ENCODE measurements at regions of chr17 and their contacts with region 1.

Region 1: GRCh38 chr17:76219670-76220383 is 20.5 kb downstream of the RNF157 start:
- DNase-seq: peak in 2 of 4 experiments; percentile 52 to 73
- ATAC-seq: peak; percentile 69
- H3K4me3 ChIP-seq: no peak overlapping the region
- H3K27ac ChIP-seq: peak overlapping the region; percentile 54; the same call in 2 of the 3 replicates
- H3K4me1 ChIP-seq: peaks cover 4 to 33% of the 10 kb centered on the region in 2 experiments
- H3K27me3 ChIP-seq: no peaks in the 10 kb centered on the region
- CTCF ChIP-seq: no peak
- EP300 ChIP-seq: no peak; the same call in 1 of the 2 replicates
- POLR2A ChIP-seq: no peak
- RAD21 ChIP-seq: no peak

Region 2: GRCh38 chr17:76191896-76192295 is 27.9 kb before region 1 on chr17:
- CTCF ChIA-PET with region 1: no interaction called
- POLR2A ChIA-PET with region 1: interaction called, 3 read pairs
- in situ Hi-C with region 1: no loop called
- intact Hi-C with region 1: loop called (anchors 5 kb)
- DNase-seq: no peak
- ATAC-seq: no peak
- H3K4me3 ChIP-seq: no peak overlapping the region
- H3K27ac ChIP-seq: peak overlapping the region; percentile 1; the same call in 1 of the 3 replicates
- H3K4me1 ChIP-seq: peaks cover 44 to 63% of the 10 kb centered on the region in 2 experiments
- H3K27me3 ChIP-seq: no peaks in the 10 kb centered on the region
- CTCF ChIP-seq: no peak
- EP300 ChIP-seq: no peak
- POLR2A ChIP-seq: no peak
- RAD21 ChIP-seq: no peak

Region 3: GRCh38 chr17:76208120-76208519 is 11.7 kb before region 1 on chr17:
- CTCF ChIA-PET with region 1: no interaction called
- POLR2A ChIA-PET with region 1: interaction called, 15 read pairs
- in situ Hi-C with region 1: no loop called
- intact Hi-C with region 1: no loop called
- DNase-seq: no peak
- ATAC-seq: no peak
- H3K4me3 ChIP-seq: no peak overlapping the region
- H3K27ac ChIP-seq: no peak overlapping the region
- H3K4me1 ChIP-seq: no peaks in the 10 kb centered on the region; a peak in 1 of 5 replicates
- H3K27me3 ChIP-seq: no peaks in the 10 kb centered on the region
- CTCF ChIP-seq: no peak
- EP300 ChIP-seq: no peak
- POLR2A ChIP-seq: no peak
- RAD21 ChIP-seq: no peak

Region 4: DNA sequence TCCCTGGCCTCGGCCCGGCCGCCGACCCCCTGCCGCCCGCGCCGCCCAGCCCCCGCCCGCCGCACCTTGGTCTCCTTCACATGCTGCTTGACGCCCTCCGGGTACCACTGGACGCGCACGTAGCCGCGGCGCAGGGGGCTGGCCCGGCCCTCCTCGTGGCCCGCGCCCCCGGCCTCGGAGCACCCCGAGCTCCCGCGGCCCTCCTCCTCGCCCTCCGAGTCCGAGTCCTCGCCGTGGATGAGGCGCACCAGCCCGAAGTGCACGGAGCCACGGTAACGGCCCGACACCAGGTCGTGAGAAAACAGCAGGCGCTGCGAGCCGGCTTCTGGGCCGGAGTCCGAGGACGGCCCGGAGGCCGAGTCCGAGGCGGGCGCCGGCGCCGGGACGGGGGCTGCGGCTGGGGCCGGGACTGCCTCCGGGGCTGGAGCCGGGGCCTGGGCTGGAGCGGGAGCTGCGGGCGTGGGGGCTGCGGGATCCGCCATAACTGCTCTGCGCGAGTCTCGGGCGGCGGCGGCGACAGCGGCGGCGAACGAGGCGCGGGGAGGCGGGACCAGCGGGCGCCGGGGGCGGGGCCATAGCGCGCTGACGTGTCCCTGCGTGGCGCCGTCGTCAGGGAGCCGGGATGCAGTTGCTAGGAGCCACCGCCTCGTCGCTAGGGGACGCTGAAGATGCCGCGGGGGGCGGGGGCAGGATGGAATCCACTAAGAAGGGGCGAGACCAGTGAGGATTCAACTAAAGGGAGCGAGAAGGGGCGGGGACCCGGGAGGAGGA is 233.0 kb after region 1 on chr17 and contains the start of gene UBE2O:
- CTCF ChIA-PET with region 1: no interaction called
- POLR2A ChIA-PET with region 1: no interaction called
- in situ Hi-C with region 1: no loop called
- intact Hi-C with region 1: no loop called
- DNase-seq: peak; percentile 91 to 98 (median 96)
- ATAC-seq: peak; percentile 96
- H3K4me3 ChIP-seq: peak within 1 kb of the TSS; percentile 97
- H3K27ac ChIP-seq: peak within 1 kb of the TSS; percentile 83; the same call in 2 of the 3 replicates
- H3K4me1 ChIP-seq: peaks cover 12 to 17% of the 10 kb centered on the region in 2 experiments; a peak in 4 of 5 replicates
- H3K27me3 ChIP-seq: no peaks in the 10 kb centered on the region
- CTCF ChIP-seq: peak in 2 of 3 experiments; percentile 7 to 43; a peak in 3 of 6 replicates
- EP300 ChIP-seq: no peak
- POLR2A ChIP-seq: no peak
- RAD21 ChIP-seq: 0 out of 4 replicates have a peak, but pooled peaks of 1 of the 2 experiments have one; percentile 10
- polyA plus RNA-seq, gene UBE2O: 1.6 to 1.7 TPM

Region 5: DNA sequence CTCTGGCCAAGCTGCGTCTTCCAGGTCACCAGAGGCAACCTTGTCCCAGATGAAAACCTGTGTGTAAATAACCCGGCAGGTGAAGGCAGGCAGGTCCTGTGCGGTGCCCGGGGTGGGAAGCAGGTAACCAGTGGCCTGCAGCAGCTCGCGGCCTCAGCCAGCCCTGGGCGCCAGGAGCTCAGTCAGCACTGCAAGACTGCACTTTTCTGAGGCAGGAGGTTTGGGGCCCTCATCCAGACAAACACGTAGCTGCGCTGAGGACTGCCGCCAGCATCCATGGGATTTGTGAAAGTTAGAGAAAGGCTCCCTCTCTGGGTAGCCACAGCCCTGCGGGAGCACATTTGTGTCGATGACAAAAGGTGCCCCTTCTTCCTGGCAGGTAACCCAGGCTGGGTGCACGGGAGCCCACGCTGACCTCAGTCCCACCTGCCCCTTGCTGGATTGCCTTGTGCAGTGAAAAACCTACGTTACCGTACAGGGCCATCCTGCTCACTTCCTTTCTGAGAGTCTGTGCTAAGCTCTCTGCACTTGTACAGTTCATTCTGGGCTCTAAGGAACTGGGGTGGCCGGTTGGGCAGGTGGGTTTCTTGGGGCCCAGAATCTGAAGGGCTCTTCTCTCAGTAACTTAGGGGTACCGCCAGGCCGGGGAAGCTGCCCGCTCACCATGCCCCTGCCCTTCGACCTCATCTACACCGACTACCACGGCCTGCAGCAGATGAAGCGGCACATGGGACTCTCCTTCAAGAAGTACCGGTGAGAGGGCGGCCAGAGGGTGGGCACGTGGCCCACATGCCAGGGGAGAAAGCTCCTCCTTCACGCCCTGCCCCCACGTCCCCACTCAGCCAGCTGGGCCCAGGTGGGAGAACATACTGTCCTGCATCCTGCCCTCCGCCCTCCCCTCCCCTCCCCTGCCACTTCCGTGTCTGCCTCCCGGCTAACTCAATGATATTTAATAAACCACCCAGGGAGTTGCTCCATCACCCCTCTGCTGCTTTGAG is 704.8 kb after region 1 on chr17:
- CTCF ChIA-PET with region 1: no interaction called
- POLR2A ChIA-PET with region 1: no interaction called
- in situ Hi-C with region 1: no loop called
- intact Hi-C with region 1: no loop called
- DNase-seq: no peak
- ATAC-seq: no peak
- H3K4me3 ChIP-seq: no peak overlapping the region
- H3K27ac ChIP-seq: no peak overlapping the region
- H3K4me1 ChIP-seq: no peaks in the 10 kb centered on the region
- H3K27me3 ChIP-seq: peaks cover 20 to 58% of the 10 kb centered on the region in 2 experiments; a peak in 4 of 5 replicates
- CTCF ChIP-seq: no peak
- EP300 ChIP-seq: no peak
- POLR2A ChIP-seq: no peak
- RAD21 ChIP-seq: no peak

Measured in K562 (cell line).